Stomach (tissue), 19 donors: ENCODE measurements at regions of chr19 and their contacts with region 1.

Region 1: DNA sequence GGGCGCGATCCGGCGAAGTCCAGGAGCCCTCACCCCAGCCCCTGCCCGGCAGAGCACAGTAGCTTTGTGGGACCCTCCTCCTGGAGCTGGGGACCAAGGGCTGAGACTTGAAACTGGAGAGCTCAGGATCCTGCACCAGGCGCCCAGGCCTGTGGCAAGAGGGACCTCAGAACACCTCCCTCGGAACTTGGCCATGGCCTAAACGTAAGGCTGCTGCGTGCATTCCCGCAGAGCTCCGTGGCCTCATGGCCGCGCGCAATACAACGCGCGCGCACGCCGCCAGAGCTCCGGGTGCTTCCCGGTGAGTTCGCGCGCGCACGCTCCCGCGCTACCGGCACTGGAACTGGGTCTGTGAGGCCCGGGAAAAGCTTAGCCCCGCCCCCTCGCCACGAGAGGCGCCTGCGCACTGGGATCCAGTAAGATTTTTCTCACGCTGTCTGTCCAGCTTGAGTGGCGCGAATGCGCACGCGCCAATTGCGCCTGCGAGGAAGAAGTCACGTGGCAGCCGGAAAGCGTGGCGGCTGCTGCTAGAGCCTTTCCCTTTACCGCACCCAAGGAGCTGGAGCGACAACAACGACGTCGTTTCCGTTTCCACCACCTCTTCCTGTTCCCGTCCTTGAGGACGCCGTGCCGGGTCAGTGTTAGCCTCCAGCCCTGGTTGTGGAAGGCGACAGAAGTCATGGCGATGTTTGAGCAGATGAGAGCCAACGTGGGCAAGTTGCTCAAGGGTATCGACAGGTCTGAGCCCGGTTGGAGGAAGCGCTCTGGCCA is at the start of gene EIF3K:
- DNase-seq: peak; percentile 99 to 100
- H3K4me3 ChIP-seq: peak within 1 kb of the TSS; percentile 85 to 98 (median 92)
- H3K27ac ChIP-seq: peak within 1 kb of the TSS; percentile 79 to 92 (median 90)
- H3K4me1 ChIP-seq: peaks cover 16 to 33% (median 20%) of the 10 kb centered on the region in 4 donors
- H3K27me3 ChIP-seq: no peaks in the 10 kb centered on the region
- CTCF ChIP-seq: no peak
- EP300 ChIP-seq: no peak
- POLR2A ChIP-seq: no peak
- total RNA-seq, gene EIF3K: 203 to 889 (median 283) TPM

Region 2: DNA sequence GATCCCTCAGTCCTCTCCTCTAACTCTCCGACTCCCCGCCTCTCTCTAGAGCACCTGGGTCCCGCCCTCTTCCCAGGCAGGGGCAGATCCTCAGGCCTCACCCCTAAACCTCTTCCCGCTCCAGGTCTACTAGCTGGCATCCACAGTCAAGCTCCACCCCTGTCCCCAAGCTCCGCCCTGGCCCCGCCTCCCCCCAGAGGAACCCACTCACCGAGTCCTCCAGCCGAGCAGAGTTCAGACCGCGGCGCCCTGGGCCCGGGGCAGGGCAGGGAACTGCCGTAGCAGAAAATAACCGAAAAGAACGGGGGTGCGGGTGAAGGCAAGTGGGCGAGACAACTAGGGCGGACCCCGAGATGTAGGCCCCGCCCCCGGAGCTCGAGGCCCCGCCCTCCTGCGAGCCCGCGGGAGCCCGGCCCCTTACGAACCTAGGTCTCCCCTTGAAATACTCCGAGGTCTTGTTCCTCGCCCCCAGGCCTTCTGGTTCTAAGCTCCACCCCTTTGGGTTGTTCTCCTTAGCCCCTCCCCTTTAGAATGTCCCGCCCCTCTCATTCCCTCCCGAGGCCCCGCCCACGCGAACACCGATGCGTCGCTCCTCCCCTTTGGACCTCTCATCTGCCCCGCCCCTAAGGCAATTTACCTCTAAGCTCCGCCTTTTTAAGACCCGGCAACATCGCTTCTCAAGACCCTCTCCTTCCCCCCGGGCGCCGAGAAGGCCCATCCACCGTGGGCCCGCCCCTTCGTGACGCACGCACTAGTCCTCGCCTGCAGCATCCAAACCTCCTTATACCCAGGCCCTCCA is 231.0 kb before region 1 on chr19 and contains the start of gene GGN:
- intact Hi-C with region 1: loop called (anchors 10 kb)
- DNase-seq: peak; percentile 86 to 90
- H3K4me3 ChIP-seq: peak within 1 kb of the TSS; percentile 47 to 57 (median 54)
- H3K27ac ChIP-seq: peak within 1 kb of the TSS in 4 of 5 donors; percentile 53 to 80 (median 75)
- H3K4me1 ChIP-seq: peaks cover 38 to 52% (median 43%) of the 10 kb centered on the region in 4 donors
- H3K27me3 ChIP-seq: peaks cover 5 to 86% (median 23%) of the 10 kb centered on the region in 3 donors
- CTCF ChIP-seq: no peak
- EP300 ChIP-seq: no peak
- POLR2A ChIP-seq: no peak
- total RNA-seq, gene GGN: not detected